ENCODE measurements at regions of chr12 and their contacts with region 1.

Region 1: DNA sequence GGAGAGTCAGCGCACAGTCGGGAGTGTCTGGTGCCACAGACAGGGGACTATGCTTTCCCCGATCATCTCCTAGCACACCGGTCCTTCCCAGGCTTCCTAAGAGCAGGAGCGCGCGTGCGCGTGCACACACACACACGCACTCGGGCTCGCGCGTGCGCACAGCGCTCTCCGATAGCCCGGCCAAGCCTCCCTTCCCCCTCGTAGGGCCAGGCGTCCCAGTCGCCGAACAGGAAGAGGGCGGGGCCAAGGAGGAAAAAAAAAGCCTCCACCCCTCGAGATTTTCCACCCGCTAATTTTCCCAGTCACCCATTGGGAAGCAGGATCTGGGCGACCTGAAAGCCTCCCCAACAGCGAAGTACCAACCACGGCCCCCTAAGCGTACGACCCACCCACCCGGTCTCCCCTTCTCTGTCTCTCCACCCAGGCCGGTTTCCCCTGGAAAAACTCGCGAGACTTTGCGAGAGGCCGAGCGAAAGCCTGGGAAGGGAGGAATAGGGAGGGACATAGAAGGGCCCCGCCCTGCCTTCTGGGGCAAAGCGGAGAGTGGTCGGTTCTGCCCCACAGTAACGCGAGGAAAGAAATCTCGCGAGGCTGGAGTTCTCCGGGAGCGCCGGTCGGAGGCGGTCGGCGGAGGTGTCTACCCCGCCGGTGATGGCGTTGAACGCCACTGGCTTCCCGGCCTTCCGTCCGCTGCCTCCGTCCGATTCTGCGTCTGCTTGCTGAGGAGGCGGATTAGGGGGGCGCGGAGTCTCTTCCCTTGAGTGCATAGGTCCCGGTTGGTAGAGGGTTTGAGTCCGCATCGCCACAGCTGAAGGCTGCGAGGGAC is at the starts of genes FGFR1OP2 and INTS13:
- DNase-seq: peak; percentile 98
- H3K4me3 ChIP-seq: peak within 1 kb of the TSS; percentile 79 to 90
- H3K27ac ChIP-seq: peak within 1 kb of the TSS; percentile 95 to 98
- H3K4me1 ChIP-seq: no peaks in the 10 kb centered on the region
- H3K27me3 ChIP-seq: no peaks in the 10 kb centered on the region
- CTCF ChIP-seq: no peak
- POLR2A ChIP-seq: peak; percentile 97
- total RNA-seq, gene FGFR1OP2: 45.0 to 64.4 TPM
- total RNA-seq, gene INTS13: 22.1 to 23.5 TPM

Region 2: DNA sequence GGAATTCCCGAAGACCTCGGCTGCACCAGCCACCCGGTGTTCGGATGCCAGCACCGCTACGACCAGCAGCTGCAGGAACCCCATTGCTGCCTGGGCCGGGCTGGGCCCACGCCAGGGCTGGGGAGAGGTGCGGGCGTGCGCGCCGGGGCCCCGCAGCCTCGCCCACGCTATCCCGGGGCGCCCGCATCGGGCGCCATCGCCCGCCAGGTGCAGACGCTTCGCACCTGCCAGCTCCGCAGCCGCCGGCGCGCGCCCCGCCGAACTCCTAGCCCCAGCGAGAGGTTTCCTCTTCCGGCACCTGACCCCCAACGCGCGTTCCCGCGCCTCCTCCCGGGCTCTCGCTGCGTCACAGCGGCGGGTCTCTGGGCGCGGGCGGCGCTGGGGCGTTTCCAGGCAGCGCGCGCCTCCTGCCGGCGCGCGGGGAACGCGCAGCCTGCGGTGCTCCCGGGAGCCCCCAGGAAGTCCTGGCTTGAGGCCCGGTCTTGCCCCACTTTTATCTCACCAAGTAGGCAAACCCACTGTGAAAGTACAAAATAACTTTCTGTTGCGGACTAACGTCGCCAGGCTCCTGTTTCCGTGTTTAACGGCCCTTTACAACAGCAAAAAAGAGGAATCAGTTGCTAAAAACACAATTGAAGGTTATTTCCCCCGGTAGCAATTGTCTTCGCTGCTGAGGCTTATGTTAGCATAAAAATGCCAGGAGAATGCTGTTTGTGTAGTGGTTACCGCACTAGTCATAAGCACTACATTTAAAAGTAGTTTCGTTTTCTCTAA is 76.2 kb after region 1 on chr12 and contains the start of gene TM7SF3:
- intact Hi-C with region 1: loop called (anchors 2 kb)
- DNase-seq: peak; percentile 95
- H3K4me3 ChIP-seq: peak within 1 kb of the TSS; percentile 82 to 91
- H3K27ac ChIP-seq: peak within 1 kb of the TSS; percentile 88 to 91
- H3K4me1 ChIP-seq: no peaks in the 10 kb centered on the region
- H3K27me3 ChIP-seq: no peaks in the 10 kb centered on the region
- CTCF ChIP-seq: peak; percentile 92 to 99 (median 98)
- POLR2A ChIP-seq: peak; percentile 65
- total RNA-seq, gene TM7SF3: 94.5 to 132 TPM

Region 3: GRCh38 chr12:27779920-27780611 is 842.0 kb after region 1 on chr12 and contains the starts of genes KLHL42 and MANSC4:
- intact Hi-C with region 1: no loop called
- DNase-seq: peak; percentile 48
- H3K4me3 ChIP-seq: peak within 1 kb of the TSS; percentile 68 to 70
- H3K27ac ChIP-seq: peak within 1 kb of the TSS; percentile 87 to 88
- H3K4me1 ChIP-seq: peaks cover 6% of the 10 kb centered on the region
- H3K27me3 ChIP-seq: no peaks in the 10 kb centered on the region
- CTCF ChIP-seq: peak in 2 of 4 experiments; percentile 5 to 13
- POLR2A ChIP-seq: no peak
- total RNA-seq, gene KLHL42: 19.1 to 79.9 TPM
- total RNA-seq, gene MANSC4: not detected